Right cardiac atrium (tissue), 5 donors: ENCODE measurements at regions of chr3 and their contacts with region 1.

Region 1: GRCh38 chr3:59049671-59050331 is at the start of gene CFAP20DC:
- DNase-seq: peak; percentile 97 to 98 (median 97)
- ATAC-seq: peak; percentile 99 to 100
- H3K4me3 ChIP-seq: peak within 1 kb of the TSS; percentile 65
- H3K27ac ChIP-seq: no peak within 1 kb of the TSS
- H3K4me1 ChIP-seq: no peaks in the 10 kb centered on the region
- H3K27me3 ChIP-seq: no peaks in the 10 kb centered on the region
- total RNA-seq, gene CFAP20DC: 0.14 to 0.28 (median 0.21) TPM in 3 of 4 donors, not detected in the other

Region 2: DNA sequence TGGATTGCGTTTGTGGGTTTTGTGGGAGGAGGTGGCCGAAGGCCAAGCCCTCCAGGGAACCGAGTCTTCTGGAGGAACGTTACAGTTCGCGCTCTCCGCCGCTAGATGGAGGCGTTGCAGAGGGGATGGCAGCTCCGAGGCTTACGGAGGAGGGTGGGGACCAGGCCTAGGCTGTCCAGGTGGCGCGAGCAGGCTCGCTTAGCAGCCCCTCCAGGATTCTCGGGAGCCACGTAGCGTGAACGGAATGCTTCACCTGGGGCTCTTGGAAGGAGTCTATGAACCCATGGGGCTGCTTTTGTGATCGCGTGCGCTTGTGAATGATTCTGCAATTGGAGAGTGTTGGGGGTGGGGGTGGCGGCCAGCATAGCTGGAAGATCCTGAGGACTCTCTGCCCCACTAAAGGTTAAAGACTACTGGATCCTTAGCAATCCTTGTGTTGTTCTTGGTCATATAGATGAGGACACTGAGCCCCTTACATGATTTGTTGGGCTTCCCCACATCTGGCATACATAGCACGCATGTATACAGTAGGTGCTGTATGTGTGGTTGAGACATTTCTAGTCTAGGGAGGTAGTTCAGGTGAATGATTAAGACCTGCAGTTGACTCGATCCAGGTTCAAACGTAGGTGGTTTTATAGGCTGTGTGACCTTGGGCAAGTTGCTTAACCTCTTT is 409.0 kb before region 1 on chr3:
- intact Hi-C with region 1: loop called in 3 of 4 experiments (anchors 5 to 10 kb)
- DNase-seq: peak; percentile 79 to 91 (median 90)
- ATAC-seq: peak; percentile 87 to 89
- H3K4me3 ChIP-seq: no peak overlapping the region
- H3K27ac ChIP-seq: no peak overlapping the region
- H3K4me1 ChIP-seq: no peaks in the 10 kb centered on the region
- H3K27me3 ChIP-seq: no peaks in the 10 kb centered on the region